CD14-positive monocyte (primary cell): ENCODE measurements at regions of chr19 and their contacts with region 1.

Region 1: GRCh38 chr19:47713046-47714021 is at the start of gene EHD2:
- DNase-seq: peak in 2 of 3 donors; percentile 17 to 37
- H3K4me3 ChIP-seq: no peak within 1 kb of the TSS
- H3K4me3 Mint-ChIP-seq: peak within 1 kb of the TSS in 1 of 2 donors; percentile 74
- H3K27ac ChIP-seq: no peak within 1 kb of the TSS
- H3K27ac Mint-ChIP-seq: peak within 1 kb of the TSS in 2 of 7 donors; percentile 28 to 86
- H3K4me1 ChIP-seq: peaks cover 0 to 7% of the 10 kb centered on the region in 2 donors
- H3K4me1 Mint-ChIP-seq: peaks cover 4% of the 10 kb centered on the region
- H3K27me3 ChIP-seq: peaks cover 8 to 23% of the 10 kb centered on the region in 2 donors
- H3K27me3 Mint-ChIP-seq: peaks cover 20 to 42% (median 23%) of the 10 kb centered on the region in 3 donors
- CTCF ChIP-seq: peak; percentile 97
- polyA plus RNA-seq, gene EHD2: not detected

Region 2: DNA sequence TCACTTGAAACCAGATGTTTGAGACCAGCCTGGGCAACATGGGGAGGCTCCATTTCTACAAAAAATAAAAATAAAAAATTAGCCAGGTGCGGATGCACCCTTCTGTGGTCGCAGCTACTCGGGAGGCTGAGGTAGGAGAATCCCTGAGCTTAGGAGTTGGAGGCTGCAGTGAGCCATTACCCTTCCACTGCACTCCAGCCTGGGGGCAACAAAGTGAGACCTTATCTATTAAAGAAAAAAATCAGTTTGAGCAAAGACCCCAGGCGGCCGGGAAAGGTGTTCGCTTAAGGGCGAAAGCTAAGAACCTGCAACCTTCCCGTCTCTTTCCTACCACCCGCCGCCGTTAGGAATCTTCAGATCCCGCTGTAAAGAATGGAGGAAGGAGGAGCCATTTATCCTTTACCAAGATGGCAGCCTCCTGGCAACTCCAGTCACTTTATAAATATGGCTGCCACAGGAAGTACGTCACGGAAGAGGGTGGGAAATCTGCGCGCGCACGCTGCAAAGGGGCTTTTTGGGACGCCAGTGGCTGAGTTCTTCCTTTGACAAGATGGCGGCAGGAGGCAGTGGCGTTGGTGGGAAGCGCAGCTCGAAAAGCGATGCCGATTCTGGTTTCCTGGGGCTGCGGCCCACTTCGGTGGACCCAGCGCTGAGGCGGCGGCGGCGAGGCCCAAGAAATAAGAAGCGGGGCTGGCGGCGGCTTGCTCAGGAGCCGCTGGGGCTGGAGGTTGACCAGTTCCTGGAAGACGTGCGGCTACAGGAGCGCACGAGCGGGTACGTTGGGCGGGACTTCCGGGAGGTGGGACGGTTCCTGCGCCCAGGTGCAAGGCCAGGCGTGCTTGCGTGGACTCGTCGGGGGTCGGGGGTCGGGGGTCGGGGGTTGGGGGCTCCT is 31.9 kb after region 1 on chr19 and contains the start of gene NOP53:
- intact Hi-C with region 1: loop called (anchors 2 to 5 kb)
- DNase-seq: peak; percentile 95 to 97 (median 96)
- H3K4me3 ChIP-seq: peak within 1 kb of the TSS; percentile 72 to 85 (median 82)
- H3K4me3 Mint-ChIP-seq: peak within 1 kb of the TSS; percentile 94 to 96
- H3K27ac ChIP-seq: peak within 1 kb of the TSS; percentile 81 to 94
- H3K27ac Mint-ChIP-seq: peak within 1 kb of the TSS; percentile 95 to 100 (median 99)
- H3K4me1 ChIP-seq: peaks cover 34 to 46% of the 10 kb centered on the region in 2 donors
- H3K4me1 Mint-ChIP-seq: peaks cover 33% of the 10 kb centered on the region
- H3K27me3 ChIP-seq: no peaks in the 10 kb centered on the region
- H3K27me3 Mint-ChIP-seq: peaks cover 3 to 7% (median 4%) of the 10 kb centered on the region in 3 donors
- CTCF ChIP-seq: no peak
- polyA plus RNA-seq, gene NOP53: 47.5 to 193 (median 70.4) TPM

Region 3: GRCh38 chr19:47786566-47786965 is 73.2 kb after region 1 on chr19:
- intact Hi-C with region 1: loop called in 1 of 2 experiments (anchors 5 kb)
- DNase-seq: no peak
- H3K4me3 ChIP-seq: no peak overlapping the region
- H3K4me3 Mint-ChIP-seq: no peak overlapping the region
- H3K27ac ChIP-seq: no peak overlapping the region
- H3K27ac Mint-ChIP-seq: no peak overlapping the region
- H3K4me1 ChIP-seq: no peaks in the 10 kb centered on the region
- H3K4me1 Mint-ChIP-seq: peaks cover 1% of the 10 kb centered on the region
- H3K27me3 ChIP-seq: no peaks in the 10 kb centered on the region
- H3K27me3 Mint-ChIP-seq: peaks cover 2 to 7% (median 3%) of the 10 kb centered on the region in 3 donors
- CTCF ChIP-seq: no peak

Region 4: DNA sequence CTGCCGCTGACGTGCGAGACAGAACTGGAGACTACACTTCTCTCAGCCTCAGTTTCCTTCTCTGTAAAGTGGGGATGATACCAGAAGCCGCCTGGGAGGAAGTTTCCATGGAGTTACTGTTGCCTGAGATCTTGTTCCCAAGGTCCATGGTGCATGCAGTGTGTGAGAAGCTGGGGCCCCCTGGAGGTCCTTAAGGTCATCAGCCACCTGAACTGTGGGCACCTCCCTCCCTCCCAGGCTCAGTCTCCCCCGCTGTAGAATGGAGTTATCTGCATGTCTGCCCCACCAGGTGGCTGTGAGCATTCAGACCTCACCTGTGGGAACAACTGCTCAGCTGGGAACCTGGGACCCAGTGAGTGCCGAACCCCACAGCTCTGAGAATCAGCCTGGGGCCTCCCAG is 111.1 kb after region 1 on chr19:
- intact Hi-C with region 1: no loop called
- DNase-seq: no peak
- H3K4me3 ChIP-seq: no peak overlapping the region
- H3K4me3 Mint-ChIP-seq: no peak overlapping the region
- H3K27ac ChIP-seq: no peak overlapping the region
- H3K27ac Mint-ChIP-seq: no peak overlapping the region
- H3K4me1 ChIP-seq: no peaks in the 10 kb centered on the region
- H3K4me1 Mint-ChIP-seq: peaks cover 7% of the 10 kb centered on the region
- H3K27me3 ChIP-seq: peaks cover 0 to 13% of the 10 kb centered on the region in 2 donors
- H3K27me3 Mint-ChIP-seq: peaks cover 25 to 34% (median 33%) of the 10 kb centered on the region in 3 donors
- CTCF ChIP-seq: no peak